ENCODE measurements at regions of chr7 and their contacts with region 1.

Region 1: GRCh38 chr7:146494952-146495596 is 378.5 kb downstream of the CNTNAP2 start:
- DNase-seq: no peak
- H3K4me3 ChIP-seq: no peak overlapping the region
- H3K27ac ChIP-seq: no peak overlapping the region
- H3K4me1 ChIP-seq: no peaks in the 10 kb centered on the region
- H3K27me3 ChIP-seq: no peaks in the 10 kb centered on the region
- CTCF ChIP-seq: no peak
- POLR2A ChIP-seq: no peak

Region 2: GRCh38 chr7:146249272-146249671 is 245.8 kb before region 1 on chr7:
- intact Hi-C with region 1: no loop called
- DNase-seq: no peak
- H3K4me3 ChIP-seq: no peak overlapping the region
- H3K27ac ChIP-seq: no peak overlapping the region
- H3K4me1 ChIP-seq: no peaks in the 10 kb centered on the region
- H3K27me3 ChIP-seq: no peaks in the 10 kb centered on the region
- CTCF ChIP-seq: no peak
- POLR2A ChIP-seq: no peak

Region 3: DNA sequence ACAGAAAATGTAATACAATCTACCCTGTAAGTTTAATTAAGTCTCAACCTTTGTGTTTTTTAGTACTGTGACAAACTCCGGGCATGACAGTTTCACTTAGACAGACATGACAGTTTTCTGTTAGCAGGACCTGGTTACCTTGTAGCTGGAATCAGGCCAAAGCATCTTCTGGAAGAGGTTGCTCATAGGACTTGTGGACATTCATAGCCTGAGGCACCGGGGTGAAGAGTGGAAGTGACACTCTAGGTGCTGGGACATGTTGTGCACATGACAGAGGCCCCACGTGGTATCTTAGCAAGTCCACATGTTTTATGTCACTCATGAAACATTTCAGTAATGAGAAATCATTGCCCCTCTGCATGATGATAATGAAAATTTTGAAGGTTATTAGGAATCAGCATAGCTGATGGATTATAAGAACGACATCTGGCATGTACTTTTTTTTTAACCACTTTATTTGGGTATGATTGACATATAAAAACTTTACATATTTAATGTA is 62.9 kb after region 1 on chr7:
- intact Hi-C with region 1: loop called (anchors 2 kb)
- DNase-seq: no peak
- H3K4me3 ChIP-seq: no peak overlapping the region
- H3K27ac ChIP-seq: no peak overlapping the region
- H3K4me1 ChIP-seq: no peaks in the 10 kb centered on the region
- H3K27me3 ChIP-seq: no peaks in the 10 kb centered on the region
- CTCF ChIP-seq: no peak
- POLR2A ChIP-seq: no peak

Region 4: GRCh38 chr7:148348476-148348875 is 1853.4 kb after region 1 on chr7:
- intact Hi-C with region 1: loop called (anchors 10 kb)
- DNase-seq: no peak
- H3K4me3 ChIP-seq: no peak overlapping the region
- H3K27ac ChIP-seq: no peak overlapping the region
- H3K4me1 ChIP-seq: no peaks in the 10 kb centered on the region
- H3K27me3 ChIP-seq: no peaks in the 10 kb centered on the region
- CTCF ChIP-seq: no peak
- POLR2A ChIP-seq: no peak

Region 5: GRCh38 chr7:148402159-148402558 is 1907.1 kb after region 1 on chr7:
- intact Hi-C with region 1: no loop called
- DNase-seq: no peak
- H3K4me3 ChIP-seq: no peak overlapping the region
- H3K27ac ChIP-seq: no peak overlapping the region
- H3K4me1 ChIP-seq: no peaks in the 10 kb centered on the region
- H3K27me3 ChIP-seq: peaks cover 0 to 3% of the 10 kb centered on the region in 2 donors
- CTCF ChIP-seq: no peak
- POLR2A ChIP-seq: no peak